ENCODE measurements at regions of chr12 and their contacts with region 1.

Region 1: GRCh38 chr12:92408072-92408900 is 262.6 kb upstream of the BTG1 start:
- DNase-seq: peak; percentile 32
- H3K4me3 Mint-ChIP-seq: no peak overlapping the region
- H3K27ac Mint-ChIP-seq: no peak overlapping the region
- H3K4me1 Mint-ChIP-seq: peaks cover 41% of the 10 kb centered on the region
- H3K27me3 Mint-ChIP-seq: no peaks in the 10 kb centered on the region

Region 2: DNA sequence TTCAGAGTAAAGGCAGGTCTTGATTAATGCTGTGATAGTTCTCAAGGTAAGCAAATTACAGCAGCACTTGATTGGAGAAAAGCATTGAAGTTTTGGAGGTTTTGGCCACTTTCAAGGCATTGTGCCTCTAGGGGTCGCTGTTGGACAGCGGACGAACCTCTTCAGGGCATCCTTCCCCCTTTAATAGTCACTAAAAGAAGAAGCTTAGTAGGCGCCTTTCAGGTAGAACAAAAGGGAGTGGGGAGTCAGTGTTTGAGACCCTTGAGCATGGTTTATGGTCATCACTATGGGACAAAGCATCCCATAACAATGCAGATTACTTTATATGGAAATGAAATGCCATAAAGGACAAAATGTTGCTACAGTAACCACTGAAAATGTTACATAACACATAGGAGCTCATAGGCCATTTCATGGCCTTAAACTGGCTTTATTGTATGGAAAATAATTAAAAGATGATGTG is 1026.2 kb before region 1 on chr12:
- intact Hi-C with region 1: loop called (anchors 5 kb)
- DNase-seq: peak; percentile 64
- H3K4me3 Mint-ChIP-seq: peak overlapping the region; percentile 78
- H3K27ac Mint-ChIP-seq: no peak overlapping the region
- H3K4me1 Mint-ChIP-seq: peaks cover 3% of the 10 kb centered on the region
- H3K27me3 Mint-ChIP-seq: peaks cover 6% of the 10 kb centered on the region

Region 3: DNA sequence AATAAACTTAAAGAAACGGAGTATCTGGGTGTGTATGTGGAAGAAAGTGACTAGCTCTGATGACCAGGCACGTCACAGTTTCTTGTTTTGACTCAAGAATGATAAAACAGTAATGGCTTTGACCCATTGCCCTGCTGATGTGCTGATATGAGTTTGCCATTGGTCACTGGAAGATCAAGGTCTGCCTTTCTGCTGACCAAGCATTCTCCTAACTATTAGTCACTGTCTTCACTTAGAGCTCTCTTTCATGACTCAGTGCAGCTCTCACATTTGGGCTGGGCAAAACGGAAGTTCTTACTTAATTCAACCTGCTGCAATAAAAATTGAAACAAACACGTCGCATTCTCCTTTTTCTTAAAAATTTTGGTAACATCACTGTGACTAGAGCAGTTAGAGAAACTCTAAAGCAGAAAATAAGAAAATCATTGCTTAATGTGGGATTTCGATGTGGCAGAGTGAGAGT is 629.3 kb before region 1 on chr12:
- intact Hi-C with region 1: loop called (anchors 5 kb)
- DNase-seq: peak; percentile 17
- H3K4me3 Mint-ChIP-seq: peak overlapping the region; percentile 62
- H3K27ac Mint-ChIP-seq: peak overlapping the region; percentile 70
- H3K4me1 Mint-ChIP-seq: peaks cover 24% of the 10 kb centered on the region
- H3K27me3 Mint-ChIP-seq: peaks cover 4% of the 10 kb centered on the region

Region 4: GRCh38 chr12:91902860-91903683 is 505.2 kb before region 1 on chr12:
- intact Hi-C with region 1: no loop called
- DNase-seq: no peak
- H3K4me3 Mint-ChIP-seq: no peak overlapping the region
- H3K27ac Mint-ChIP-seq: no peak overlapping the region
- H3K4me1 Mint-ChIP-seq: peaks cover 8% of the 10 kb centered on the region
- H3K27me3 Mint-ChIP-seq: no peaks in the 10 kb centered on the region

Region 5: GRCh38 chr12:92208613-92209121 is 199.6 kb before region 1 on chr12:
- intact Hi-C with region 1: loop called (anchors 1 kb)
- DNase-seq: peak; percentile 19
- H3K4me3 Mint-ChIP-seq: peak overlapping the region; percentile 22
- H3K27ac Mint-ChIP-seq: peak overlapping the region; percentile 24
- H3K4me1 Mint-ChIP-seq: peaks cover 37% of the 10 kb centered on the region
- H3K27me3 Mint-ChIP-seq: no peaks in the 10 kb centered on the region

Region 6: GRCh38 chr12:92363295-92364146 is 44.8 kb before region 1 on chr12:
- intact Hi-C with region 1: loop called (anchors 1 kb)
- DNase-seq: no peak
- H3K4me3 Mint-ChIP-seq: peak overlapping the region; percentile 64
- H3K27ac Mint-ChIP-seq: peak overlapping the region; percentile 57
- H3K4me1 Mint-ChIP-seq: peaks cover 37% of the 10 kb centered on the region
- H3K27me3 Mint-ChIP-seq: no peaks in the 10 kb centered on the region

Region 7: GRCh38 chr12:92570056-92570753 is 161.9 kb after region 1 on chr12:
- intact Hi-C with region 1: loop called (anchors 1 kb)
- DNase-seq: no peak
- H3K4me3 Mint-ChIP-seq: no peak overlapping the region
- H3K27ac Mint-ChIP-seq: no peak overlapping the region
- H3K4me1 Mint-ChIP-seq: peaks cover 20% of the 10 kb centered on the region
- H3K27me3 Mint-ChIP-seq: no peaks in the 10 kb centered on the region